ENCODE measurements at regions of chr7 and their contacts with region 1.

Region 1: DNA sequence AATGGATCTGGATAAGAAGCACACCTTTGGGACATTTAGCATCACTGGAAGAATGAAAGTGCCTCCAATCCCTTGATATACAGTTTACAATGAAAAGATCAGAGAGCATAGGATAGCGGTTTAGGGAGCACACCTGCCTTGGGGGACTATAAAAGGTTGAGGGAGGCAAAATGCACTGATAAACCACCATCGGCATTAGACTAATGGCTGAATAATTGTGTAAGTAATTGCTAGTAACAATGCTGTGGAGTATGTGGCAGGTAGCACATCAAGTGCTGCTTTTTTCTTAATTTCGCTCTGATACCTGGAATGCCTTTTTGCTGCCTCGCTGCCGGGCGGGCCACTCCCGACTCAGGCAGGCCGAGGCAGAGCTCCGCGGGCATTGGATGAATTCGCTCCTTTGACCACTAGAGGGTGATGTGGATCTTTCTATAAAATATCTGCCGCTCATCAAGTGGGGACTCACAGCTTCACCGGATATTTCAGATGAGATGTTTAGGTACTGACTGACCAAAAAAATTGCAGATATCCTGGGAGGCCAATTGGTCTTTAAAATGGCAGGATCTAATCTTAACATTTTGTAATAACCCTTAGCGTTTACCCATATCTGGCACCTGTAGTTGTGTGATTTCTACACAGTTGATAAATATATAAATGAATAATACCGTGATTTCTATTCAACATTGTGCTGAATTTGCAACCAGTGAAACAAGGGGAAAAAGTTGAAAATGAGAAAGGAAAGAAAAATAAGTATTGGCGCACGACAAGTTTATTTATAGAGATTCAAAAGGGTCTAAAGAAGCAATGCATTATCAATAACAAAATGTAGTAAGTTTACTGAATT is 116.8 kb upstream of the PRSS1 start:
- DNase-seq: peak; percentile 26 to 76 (median 63)
- ATAC-seq: peak; percentile 80
- H3K4me3 ChIP-seq: no peak overlapping the region
- H3K4me3 Mint-ChIP-seq: peak overlapping the region in 5 of 10 donors; percentile 6 to 63 (median 38)
- H3K27ac ChIP-seq: no peak overlapping the region
- H3K27ac Mint-ChIP-seq: peak overlapping the region in 7 of 9 donors; percentile 13 to 84 (median 46)
- H3K4me1 ChIP-seq: no peaks in the 10 kb centered on the region
- H3K4me1 Mint-ChIP-seq: peaks cover 4 to 17% (median 11%) of the 10 kb centered on the region in 7 donors
- H3K27me3 ChIP-seq: no peaks in the 10 kb centered on the region
- H3K27me3 Mint-ChIP-seq: peaks cover 0 to 15% (median 0%) of the 10 kb centered on the region in 5 donors

Region 2: GRCh38 chr7:142669074-142669654 is 36.7 kb after region 1 on chr7:
- CTCF ChIA-PET with region 1: interaction called, 3 read pairs
- POLR2A ChIA-PET with region 1: interaction called, 7 read pairs
- intact Hi-C with region 1: loop called (anchors 1 to 2 kb)
- DNase-seq: peak in 5 of 9 donors; percentile 14 to 40 (median 29)
- ATAC-seq: no peak
- H3K4me3 ChIP-seq: no peak overlapping the region
- H3K4me3 Mint-ChIP-seq: peak overlapping the region in 6 of 10 donors; percentile 15 to 64 (median 32)
- H3K27ac ChIP-seq: no peak overlapping the region
- H3K27ac Mint-ChIP-seq: peak overlapping the region in 7 of 9 donors; percentile 3 to 73 (median 49)
- H3K4me1 ChIP-seq: peaks cover 0 to 14% of the 10 kb centered on the region in 2 donors
- H3K4me1 Mint-ChIP-seq: peaks cover 11 to 34% (median 34%) of the 10 kb centered on the region in 7 donors
- H3K27me3 ChIP-seq: no peaks in the 10 kb centered on the region
- H3K27me3 Mint-ChIP-seq: no peaks in the 10 kb centered on the region

Region 3: DNA sequence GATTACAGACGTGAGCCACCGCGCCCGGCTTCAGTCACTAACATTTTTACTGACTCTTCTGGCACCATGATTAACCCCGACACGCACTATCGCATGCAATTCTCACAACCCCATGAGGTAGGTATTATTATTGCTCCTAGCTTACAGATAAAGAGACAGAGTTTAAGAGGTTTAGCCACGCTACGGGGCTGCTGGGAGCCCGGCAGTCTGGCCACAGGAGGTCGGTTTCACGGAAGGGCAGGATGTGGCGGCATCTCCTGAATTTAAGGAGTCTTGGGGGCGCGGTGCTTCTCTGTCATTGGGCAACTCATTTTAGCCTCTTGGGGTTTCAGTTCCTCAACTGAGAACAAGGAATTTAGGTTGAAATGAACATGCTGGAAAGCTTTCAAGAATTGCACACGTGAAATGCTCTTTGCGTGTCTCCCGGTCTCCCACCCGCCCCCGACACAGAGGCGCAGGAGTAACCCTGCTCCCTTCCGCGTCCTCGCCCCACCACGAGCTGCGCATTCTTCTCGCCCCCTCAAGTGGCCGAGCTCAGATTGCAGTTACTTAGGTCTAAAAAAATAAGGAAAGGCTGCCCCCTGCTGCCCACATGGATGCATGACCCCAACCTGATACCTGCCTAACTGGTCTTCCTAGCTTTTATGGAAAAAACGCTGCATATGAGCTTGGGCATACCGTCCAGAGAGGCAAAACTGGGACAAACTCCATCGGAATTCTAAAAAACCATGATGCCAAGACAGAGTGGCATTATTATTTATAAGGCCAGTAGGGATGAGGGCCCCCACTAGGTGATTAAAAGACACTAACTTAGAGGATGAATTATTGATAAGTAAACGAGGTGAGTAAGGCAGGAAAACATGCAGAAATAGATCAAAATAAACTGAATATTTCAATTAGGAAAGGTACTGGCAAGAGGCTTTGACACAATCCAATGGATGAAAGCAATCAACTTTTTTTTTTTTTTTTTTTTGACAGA is 150.7 kb after region 1 on chr7:
- CTCF ChIA-PET with region 1: interaction called, 30 read pairs
- POLR2A ChIA-PET with region 1: interaction called, 39 read pairs
- intact Hi-C with region 1: loop called (anchors 1 kb)
- DNase-seq: peak; percentile 54 to 84 (median 77)
- ATAC-seq: peak; percentile 74
- H3K4me3 ChIP-seq: peak overlapping the region; percentile 52
- H3K4me3 Mint-ChIP-seq: peak overlapping the region; percentile 70 to 99 (median 86)
- H3K27ac ChIP-seq: peak overlapping the region; percentile 98
- H3K27ac Mint-ChIP-seq: peak overlapping the region; percentile 75 to 100 (median 99)
- H3K4me1 ChIP-seq: peaks cover 0 to 5% of the 10 kb centered on the region in 2 donors
- H3K4me1 Mint-ChIP-seq: peaks cover 0 to 16% (median 10%) of the 10 kb centered on the region in 7 donors
- H3K27me3 ChIP-seq: no peaks in the 10 kb centered on the region
- H3K27me3 Mint-ChIP-seq: no peaks in the 10 kb centered on the region

Region 4: GRCh38 chr7:142835487-142835886 is 203.0 kb after region 1 on chr7:
- CTCF ChIA-PET with region 1: interaction called, 7 read pairs
- POLR2A ChIA-PET with region 1: interaction called, 4 read pairs
- intact Hi-C with region 1: loop called in 1 of 2 experiments (anchors 1 kb)
- DNase-seq: peak in 5 of 9 donors; percentile 29 to 57 (median 42)
- ATAC-seq: no peak
- H3K4me3 ChIP-seq: no peak overlapping the region
- H3K4me3 Mint-ChIP-seq: peak overlapping the region in 5 of 10 donors; percentile 18 to 61 (median 45)
- H3K27ac ChIP-seq: no peak overlapping the region
- H3K27ac Mint-ChIP-seq: peak overlapping the region in 8 of 9 donors; percentile 15 to 88 (median 70)
- H3K4me1 ChIP-seq: no peaks in the 10 kb centered on the region
- H3K4me1 Mint-ChIP-seq: peaks cover 2 to 34% (median 16%) of the 10 kb centered on the region in 7 donors
- H3K27me3 ChIP-seq: no peaks in the 10 kb centered on the region
- H3K27me3 Mint-ChIP-seq: peaks cover 0 to 4% (median 0%) of the 10 kb centered on the region in 5 donors

Region 5: DNA sequence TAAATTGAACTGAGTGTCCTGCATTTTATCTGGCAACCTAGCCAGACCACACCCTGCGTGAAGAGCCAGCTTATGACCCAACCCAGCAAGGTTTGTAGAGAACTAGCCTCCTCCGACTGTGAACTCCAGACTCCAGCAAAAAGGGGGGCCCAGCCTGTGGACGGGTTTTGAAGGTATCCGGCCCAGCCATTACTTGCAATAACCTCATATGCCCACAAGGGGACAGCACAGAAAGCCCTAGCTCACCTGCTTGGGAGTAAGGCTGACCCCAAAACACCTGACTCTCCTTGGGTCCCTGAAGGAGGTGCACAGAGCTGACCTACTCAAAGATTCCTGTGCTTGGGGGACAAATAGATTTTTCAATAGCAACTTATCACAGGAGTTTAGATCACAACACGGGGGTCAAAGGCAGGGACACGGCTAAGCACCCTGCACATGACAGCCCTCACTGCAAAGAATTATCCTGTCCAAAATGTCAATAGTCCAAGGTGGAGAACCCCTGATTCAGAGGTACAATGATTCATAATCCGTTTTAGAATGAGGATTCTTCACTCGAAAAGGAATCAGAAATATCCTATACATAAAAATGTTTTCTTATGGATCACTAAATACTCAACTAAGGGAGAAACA is 248.5 kb after region 1 on chr7:
- CTCF ChIA-PET with region 1: no interaction called
- POLR2A ChIA-PET with region 1: no interaction called
- intact Hi-C with region 1: loop called in 1 of 2 experiments (anchors 1 kb)
- DNase-seq: peak; percentile 29 to 60 (median 53)
- ATAC-seq: peak; percentile 76
- H3K4me3 ChIP-seq: no peak overlapping the region
- H3K4me3 Mint-ChIP-seq: no peak overlapping the region
- H3K27ac ChIP-seq: no peak overlapping the region
- H3K27ac Mint-ChIP-seq: no peak overlapping the region
- H3K4me1 ChIP-seq: no peaks in the 10 kb centered on the region
- H3K4me1 Mint-ChIP-seq: no peaks in the 10 kb centered on the region
- H3K27me3 ChIP-seq: no peaks in the 10 kb centered on the region
- H3K27me3 Mint-ChIP-seq: peaks cover 0 to 20% (median 2%) of the 10 kb centered on the region in 5 donors